ENCODE measurements at regions of chr17 and their contacts with region 1.

Region 1: DNA sequence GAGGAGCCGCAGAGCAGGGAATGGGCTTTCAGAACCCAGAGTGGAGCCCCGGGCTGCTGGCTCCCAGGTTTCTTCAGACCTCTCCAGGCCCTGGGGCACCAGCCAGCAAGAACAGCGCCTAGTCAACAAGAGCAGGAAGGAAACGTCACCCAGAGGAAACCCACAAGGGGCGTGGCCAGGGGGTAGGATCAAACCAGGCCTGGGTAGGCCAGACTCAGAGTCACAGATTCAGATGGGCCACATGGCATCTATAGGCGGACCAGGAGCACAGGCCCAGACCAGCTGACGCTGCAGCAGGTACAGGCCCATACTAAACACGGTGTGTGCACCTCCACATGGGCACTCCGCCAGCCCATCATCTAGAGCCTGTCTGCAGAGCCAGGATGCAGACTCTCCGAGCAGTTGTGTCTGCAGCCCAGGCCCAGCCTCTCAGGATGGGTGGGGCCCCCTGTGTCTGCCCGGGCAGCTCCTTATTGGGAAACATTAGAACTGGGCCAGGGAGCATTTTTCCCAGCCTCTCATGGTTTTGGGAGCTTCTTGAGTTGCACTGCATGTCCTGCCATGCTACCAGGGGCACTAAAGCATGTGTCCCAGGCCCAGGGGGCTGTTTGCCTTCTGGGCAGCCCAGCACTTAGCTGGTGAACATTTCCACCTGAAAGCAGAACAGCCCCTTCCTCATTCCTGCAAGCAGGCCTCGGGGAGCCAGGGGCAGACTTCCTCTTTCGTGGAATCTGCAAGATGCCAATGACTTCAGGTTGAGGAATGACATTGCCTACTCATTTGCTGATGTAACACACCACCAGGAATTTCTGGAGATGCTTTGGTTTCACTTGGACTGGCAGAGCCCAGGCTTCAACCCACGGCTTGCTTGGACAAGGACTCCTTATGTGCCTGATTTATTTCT is at the start of gene NLRP1:
- DNase-seq: peak; percentile 99
- H3K4me3 Mint-ChIP-seq: peak within 1 kb of the TSS; percentile 94
- H3K27ac Mint-ChIP-seq: peak within 1 kb of the TSS; percentile 98
- H3K4me1 Mint-ChIP-seq: peaks cover 64% of the 10 kb centered on the region
- H3K27me3 Mint-ChIP-seq: no peaks in the 10 kb centered on the region
- total RNA-seq, gene NLRP1: 44.9 to 49.4 TPM

Region 2: DNA sequence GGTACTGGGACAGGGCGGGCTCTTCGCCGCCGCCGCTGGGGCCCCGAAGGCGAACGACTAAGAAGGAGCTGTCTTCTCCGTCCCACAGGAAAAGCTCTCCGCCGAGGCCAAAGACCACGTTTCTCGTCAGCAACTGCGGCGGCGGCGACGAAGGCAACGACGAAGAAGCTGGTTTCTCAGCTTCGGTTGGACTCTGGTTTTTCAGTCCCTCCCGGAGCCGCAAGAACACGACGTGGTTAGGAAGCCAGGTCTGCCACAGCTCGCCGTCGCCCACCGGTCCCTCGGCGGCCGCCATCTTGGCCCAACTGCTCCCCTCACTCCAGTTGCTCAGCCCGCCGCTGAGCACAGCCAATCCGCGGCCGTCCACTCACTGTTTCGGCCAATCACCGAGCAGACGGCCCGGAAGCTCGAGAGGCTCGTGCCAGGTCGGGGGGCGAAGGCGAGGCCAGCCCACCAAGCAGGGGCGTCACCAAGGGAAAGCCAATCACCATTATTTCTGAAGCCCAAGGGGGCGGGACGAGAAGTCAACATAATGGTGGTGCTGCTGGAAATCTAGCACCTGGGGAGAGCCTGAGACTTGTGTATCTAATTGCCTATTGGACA is 165.2 kb before region 1 on chr17 and contains the start of gene NUP88:
- CTCF ChIA-PET with region 1: no interaction called
- intact Hi-C with region 1: loop called (anchors 1 kb)
- DNase-seq: peak; percentile 97
- H3K4me3 Mint-ChIP-seq: peak within 1 kb of the TSS; percentile 100
- H3K27ac Mint-ChIP-seq: peak within 1 kb of the TSS; percentile 100
- H3K4me1 Mint-ChIP-seq: peaks cover 50% of the 10 kb centered on the region
- H3K27me3 Mint-ChIP-seq: no peaks in the 10 kb centered on the region
- total RNA-seq, gene NUP88: 115 to 131 TPM

Region 3: DNA sequence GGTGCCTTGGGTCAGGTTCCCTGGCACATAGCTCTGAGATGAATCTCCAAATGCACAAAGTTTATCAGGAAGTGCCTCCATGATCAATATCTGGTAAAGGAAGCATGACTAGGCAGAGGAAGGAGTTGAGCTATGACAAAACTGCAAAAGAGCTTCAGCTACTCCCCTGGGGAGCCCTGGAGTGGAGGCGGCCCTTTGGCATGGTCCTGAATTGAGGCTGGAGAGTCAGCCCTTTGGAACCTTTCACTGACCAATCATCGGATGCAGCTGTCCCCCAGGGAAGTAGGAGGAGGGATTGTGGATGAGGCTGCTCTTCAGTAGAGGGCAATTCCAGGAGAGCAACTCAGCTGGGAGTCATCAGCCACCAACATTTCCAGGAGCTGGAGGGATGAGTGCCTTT is 45.8 kb after region 1 on chr17:
- CTCF ChIA-PET with region 1: no interaction called
- intact Hi-C with region 1: no loop called
- DNase-seq: no peak
- H3K4me3 Mint-ChIP-seq: no peak overlapping the region
- H3K27ac Mint-ChIP-seq: no peak overlapping the region
- H3K4me1 Mint-ChIP-seq: no peaks in the 10 kb centered on the region
- H3K27me3 Mint-ChIP-seq: peaks cover 6% of the 10 kb centered on the region

Region 4: GRCh38 chr17:5706577-5707216 is 122.1 kb after region 1 on chr17:
- CTCF ChIA-PET with region 1: interaction called, 15 read pairs
- intact Hi-C with region 1: loop called (anchors 1 kb)
- DNase-seq: peak; percentile 76
- H3K4me3 Mint-ChIP-seq: no peak overlapping the region
- H3K27ac Mint-ChIP-seq: no peak overlapping the region
- H3K4me1 Mint-ChIP-seq: no peaks in the 10 kb centered on the region
- H3K27me3 Mint-ChIP-seq: peaks cover 21% of the 10 kb centered on the region

Region 5: GRCh38 chr17:5950878-5951277 is 366.2 kb after region 1 on chr17:
- CTCF ChIA-PET with region 1: no interaction called
- intact Hi-C with region 1: no loop called
- DNase-seq: no peak
- H3K4me3 Mint-ChIP-seq: no peak overlapping the region
- H3K27ac Mint-ChIP-seq: no peak overlapping the region
- H3K4me1 Mint-ChIP-seq: no peaks in the 10 kb centered on the region
- H3K27me3 Mint-ChIP-seq: peaks cover 31% of the 10 kb centered on the region

Region 6: GRCh38 chr17:6374761-6375312 is 790.2 kb after region 1 on chr17:
- CTCF ChIA-PET with region 1: no interaction called
- intact Hi-C with region 1: loop called (anchors 2 kb)
- DNase-seq: peak; percentile 92
- H3K4me3 Mint-ChIP-seq: peak overlapping the region; percentile 9
- H3K27ac Mint-ChIP-seq: peak overlapping the region; percentile 86
- H3K4me1 Mint-ChIP-seq: peaks cover 21% of the 10 kb centered on the region
- H3K27me3 Mint-ChIP-seq: peaks cover 23% of the 10 kb centered on the region

Region 7: DNA sequence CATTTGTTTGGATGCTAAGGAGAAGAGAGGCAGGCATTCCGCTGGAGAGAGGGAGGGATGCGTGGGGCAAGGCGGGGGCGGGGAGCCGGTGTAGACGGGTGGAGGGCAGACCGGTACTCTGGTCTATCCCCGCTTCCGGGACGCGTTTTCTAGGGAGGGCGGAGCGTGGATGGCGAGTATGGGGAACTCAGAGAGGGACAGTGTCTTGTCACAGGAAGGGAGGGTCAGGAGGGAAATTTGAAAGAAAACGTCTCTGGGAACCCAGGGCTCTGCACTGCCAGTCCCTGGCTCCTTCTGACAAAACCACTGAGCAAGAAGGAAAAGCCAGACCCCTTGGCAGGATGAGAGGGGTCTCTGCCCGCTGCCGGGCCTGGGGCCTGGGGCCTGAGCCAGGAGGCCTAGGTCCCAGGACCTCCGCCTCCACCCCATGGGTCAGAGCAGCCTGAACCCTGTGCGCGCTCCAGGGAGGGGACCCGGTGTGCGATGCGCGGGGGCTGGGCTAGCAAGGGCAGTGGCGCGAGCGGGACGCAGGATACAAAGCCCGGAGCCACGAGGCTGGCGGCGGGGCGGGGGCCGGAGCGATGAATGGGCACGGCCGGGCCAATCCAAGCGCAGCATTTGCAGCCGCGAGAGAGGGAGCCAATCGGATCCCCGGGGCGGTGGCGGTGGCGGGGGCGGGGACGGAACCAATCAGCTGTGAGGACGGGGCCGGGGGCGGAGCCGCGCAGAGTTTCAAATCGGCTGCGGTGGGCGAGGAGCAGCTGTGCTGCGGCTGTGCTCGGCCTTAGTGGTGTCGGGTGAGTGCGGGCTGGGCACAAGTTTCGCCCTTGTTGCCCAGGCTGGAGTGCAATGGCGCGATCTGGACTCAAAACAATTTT is 859.3 kb after region 1 on chr17 and contains the start of gene PIMREG:
- CTCF ChIA-PET with region 1: no interaction called
- intact Hi-C with region 1: loop called (anchors 2 kb)
- DNase-seq: peak; percentile 98
- H3K4me3 Mint-ChIP-seq: peak within 1 kb of the TSS; percentile 97
- H3K27ac Mint-ChIP-seq: peak within 1 kb of the TSS; percentile 92
- H3K4me1 Mint-ChIP-seq: peaks cover 11% of the 10 kb centered on the region
- H3K27me3 Mint-ChIP-seq: peaks cover 5% of the 10 kb centered on the region
- total RNA-seq, gene PIMREG: 18.1 to 19.0 TPM